ENCODE measurements at regions of chr11 and their contacts with region 1.

Region 1: GRCh38 chr11:10933455-10934292 is 75.8 kb upstream of the ZBED5 start:
- DNase-seq: peak; percentile 94 to 95
- ATAC-seq: peak; percentile 92
- H3K4me3 ChIP-seq: peak overlapping the region; percentile 54 to 69
- H3K27ac ChIP-seq: peak overlapping the region in 1 of 2 donors; percentile 90
- H3K4me1 ChIP-seq: no peaks in the 10 kb centered on the region
- H3K27me3 ChIP-seq: no peaks in the 10 kb centered on the region

Region 2: DNA sequence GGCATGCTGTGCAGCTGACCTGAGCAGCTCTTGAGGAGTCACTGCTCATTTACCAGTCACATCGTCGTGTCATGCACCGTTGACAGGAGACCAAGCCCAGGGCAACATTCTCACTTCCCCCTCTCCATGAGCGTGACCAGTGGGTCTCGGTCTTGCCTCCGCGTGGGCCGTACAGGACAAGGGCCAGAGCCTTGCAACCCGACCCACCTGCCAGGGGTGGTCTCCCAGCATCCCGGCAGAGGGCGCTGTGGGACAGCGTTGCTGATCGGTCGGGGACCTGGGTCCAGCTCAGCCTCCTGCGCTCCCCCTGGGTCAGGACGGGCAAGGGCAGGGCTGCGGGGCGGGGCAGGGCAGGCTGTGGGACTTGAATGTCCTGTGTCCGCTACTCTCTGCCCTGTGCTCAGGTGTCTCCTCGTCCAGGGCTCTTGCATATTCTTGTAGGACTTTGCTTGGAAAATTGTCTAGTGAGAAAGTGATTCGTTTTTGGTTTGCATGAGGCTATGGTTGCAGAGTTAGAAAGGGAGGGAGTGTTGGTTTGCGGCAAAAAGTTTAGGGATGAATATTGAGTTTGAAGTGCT is 141.2 kb before region 1 on chr11:
- intact Hi-C with region 1: loop called (anchors 5 kb)
- DNase-seq: peak; percentile 91 to 97
- ATAC-seq: peak; percentile 95
- H3K4me3 ChIP-seq: no peak overlapping the region
- H3K27ac ChIP-seq: no peak overlapping the region
- H3K4me1 ChIP-seq: no peaks in the 10 kb centered on the region
- H3K27me3 ChIP-seq: no peaks in the 10 kb centered on the region

Region 3: GRCh38 chr11:10808553-10809372 is 124.9 kb before region 1 on chr11 and contains the start of gene EIF4G2:
- intact Hi-C with region 1: loop called (anchors 1 to 2 kb)
- DNase-seq: peak; percentile 99
- ATAC-seq: peak; percentile 98
- H3K4me3 ChIP-seq: peak within 1 kb of the TSS; percentile 88 to 94
- H3K27ac ChIP-seq: peak within 1 kb of the TSS; percentile 72 to 95
- H3K4me1 ChIP-seq: no peaks in the 10 kb centered on the region
- H3K27me3 ChIP-seq: no peaks in the 10 kb centered on the region
- total RNA-seq, gene EIF4G2: 615 to 752 TPM

Region 4: DNA sequence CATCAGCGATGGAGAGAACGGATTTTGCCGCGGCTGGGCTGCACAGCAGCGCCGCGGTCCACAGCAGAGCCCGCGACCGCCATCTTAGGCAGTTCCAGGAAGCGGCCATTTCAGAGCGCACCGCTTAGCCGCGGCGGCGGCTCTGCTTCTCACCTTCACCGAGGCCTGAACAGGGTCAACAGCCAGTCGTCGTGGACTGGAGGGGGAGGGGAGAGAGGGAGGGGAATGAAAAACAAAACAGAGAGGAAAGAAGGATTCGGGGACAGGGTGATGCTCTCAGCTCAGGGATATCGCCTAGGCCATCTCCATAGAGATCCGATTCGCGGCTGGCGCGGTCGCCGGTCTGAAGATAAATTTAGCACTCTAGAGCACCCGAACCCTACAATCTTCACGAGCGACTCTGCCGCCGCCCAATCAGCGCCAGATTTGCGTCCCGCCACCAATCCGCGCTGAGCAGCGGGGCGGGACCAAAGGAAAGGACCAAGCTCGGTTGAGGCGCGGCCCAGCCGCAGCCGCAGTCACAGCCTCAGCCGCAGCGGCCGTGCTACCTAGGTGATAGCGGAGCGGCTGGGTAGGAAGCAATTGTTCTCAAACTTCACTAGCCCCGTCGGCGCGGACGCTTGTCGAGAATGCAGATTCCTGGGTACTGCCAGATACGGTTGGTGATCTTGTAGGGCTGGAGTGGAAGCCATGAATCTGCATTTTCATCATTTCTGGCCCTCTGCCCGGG is 75.8 kb before region 1 on chr11 and contains the start of gene ZBED5:
- intact Hi-C with region 1: loop called (anchors 2 kb)
- DNase-seq: peak; percentile 98
- ATAC-seq: peak; percentile 99
- H3K4me3 ChIP-seq: peak within 1 kb of the TSS; percentile 83 to 89
- H3K27ac ChIP-seq: peak within 1 kb of the TSS; percentile 96 to 98
- H3K4me1 ChIP-seq: peaks cover 0 to 5% of the 10 kb centered on the region in 2 donors
- H3K27me3 ChIP-seq: no peaks in the 10 kb centered on the region
- total RNA-seq, gene ZBED5: 48.4 to 63.8 TPM

Region 5: DNA sequence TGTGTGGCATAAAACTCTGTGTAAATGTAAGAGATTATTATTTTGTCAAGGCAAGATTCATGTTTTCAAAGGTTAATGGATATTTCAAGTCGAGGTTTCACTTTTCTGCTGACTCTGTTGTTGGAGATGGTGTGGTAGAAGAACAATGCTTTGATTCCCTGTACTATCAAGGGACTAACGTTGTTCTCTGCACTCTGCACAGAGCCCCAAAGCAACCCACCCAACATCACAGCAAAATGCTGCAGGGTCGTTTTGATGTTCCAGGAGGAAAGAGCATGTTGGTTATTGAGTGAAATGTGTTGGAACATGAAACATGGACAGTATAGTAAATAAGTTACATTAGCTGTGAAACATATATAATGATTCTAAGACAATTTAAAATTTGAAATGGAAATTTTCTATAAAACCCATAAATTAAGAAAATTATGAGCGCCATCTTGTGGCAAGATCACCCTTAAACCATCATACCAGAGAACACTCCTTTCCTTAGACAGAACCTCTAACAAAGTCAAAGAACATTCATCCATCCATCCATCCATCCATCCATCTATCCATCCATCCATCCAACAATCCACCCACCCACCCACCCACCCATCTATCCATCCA is 88.6 kb after region 1 on chr11:
- intact Hi-C with region 1: loop called (anchors 1 to 2 kb)
- DNase-seq: no peak
- ATAC-seq: no peak
- H3K4me3 ChIP-seq: no peak overlapping the region
- H3K27ac ChIP-seq: no peak overlapping the region
- H3K4me1 ChIP-seq: no peaks in the 10 kb centered on the region
- H3K27me3 ChIP-seq: no peaks in the 10 kb centered on the region

Region 6: GRCh38 chr11:11787305-11788062 is 853.8 kb after region 1 on chr11:
- intact Hi-C with region 1: loop called in 1 of 2 experiments (anchors 10 kb)
- DNase-seq: peak; percentile 79 to 87
- ATAC-seq: peak; percentile 86
- H3K4me3 ChIP-seq: no peak overlapping the region
- H3K27ac ChIP-seq: no peak overlapping the region
- H3K4me1 ChIP-seq: no peaks in the 10 kb centered on the region
- H3K27me3 ChIP-seq: no peaks in the 10 kb centered on the region

Measured in aorta (tissue), 5 donors.